ENCODE measurements at regions of chr13 and their contacts with region 1.

Region 1: GRCh38 chr13:20828539-20829364 is 55.0 kb upstream of the EEF1AKMT1 start:
- DNase-seq: peak; percentile 32
- ATAC-seq: peak; percentile 86
- H3K4me3 Mint-ChIP-seq: no peak overlapping the region
- H3K27ac Mint-ChIP-seq: peak overlapping the region; percentile 48
- H3K4me1 Mint-ChIP-seq: peaks cover 7% of the 10 kb centered on the region
- H3K27me3 Mint-ChIP-seq: no peaks in the 10 kb centered on the region
- CTCF ChIP-seq: peak; percentile 79

Region 2: GRCh38 chr13:20495082-20496023 is 333.4 kb before region 1 on chr13:
- CTCF ChIA-PET with region 1: interaction called, 11 read pairs
- POLR2A ChIA-PET with region 1: no interaction called
- intact Hi-C with region 1: loop called (anchors 2 kb)
- DNase-seq: peak; percentile 79
- ATAC-seq: peak; percentile 89
- H3K4me3 Mint-ChIP-seq: no peak overlapping the region
- H3K27ac Mint-ChIP-seq: no peak overlapping the region
- H3K4me1 Mint-ChIP-seq: peaks cover 2% of the 10 kb centered on the region
- H3K27me3 Mint-ChIP-seq: no peaks in the 10 kb centered on the region
- CTCF ChIP-seq: peak; percentile 96

Region 3: GRCh38 chr13:20721454-20722357 is 107.0 kb before region 1 on chr13:
- CTCF ChIA-PET with region 1: interaction called, 15 read pairs
- POLR2A ChIA-PET with region 1: interaction called, 3 read pairs
- intact Hi-C with region 1: no loop called
- DNase-seq: peak; percentile 66
- ATAC-seq: peak; percentile 75
- H3K4me3 Mint-ChIP-seq: peak overlapping the region; percentile 61
- H3K27ac Mint-ChIP-seq: no peak overlapping the region
- H3K4me1 Mint-ChIP-seq: peaks cover 6% of the 10 kb centered on the region
- H3K27me3 Mint-ChIP-seq: peaks cover 20% of the 10 kb centered on the region
- CTCF ChIP-seq: no peak

Region 4: DNA sequence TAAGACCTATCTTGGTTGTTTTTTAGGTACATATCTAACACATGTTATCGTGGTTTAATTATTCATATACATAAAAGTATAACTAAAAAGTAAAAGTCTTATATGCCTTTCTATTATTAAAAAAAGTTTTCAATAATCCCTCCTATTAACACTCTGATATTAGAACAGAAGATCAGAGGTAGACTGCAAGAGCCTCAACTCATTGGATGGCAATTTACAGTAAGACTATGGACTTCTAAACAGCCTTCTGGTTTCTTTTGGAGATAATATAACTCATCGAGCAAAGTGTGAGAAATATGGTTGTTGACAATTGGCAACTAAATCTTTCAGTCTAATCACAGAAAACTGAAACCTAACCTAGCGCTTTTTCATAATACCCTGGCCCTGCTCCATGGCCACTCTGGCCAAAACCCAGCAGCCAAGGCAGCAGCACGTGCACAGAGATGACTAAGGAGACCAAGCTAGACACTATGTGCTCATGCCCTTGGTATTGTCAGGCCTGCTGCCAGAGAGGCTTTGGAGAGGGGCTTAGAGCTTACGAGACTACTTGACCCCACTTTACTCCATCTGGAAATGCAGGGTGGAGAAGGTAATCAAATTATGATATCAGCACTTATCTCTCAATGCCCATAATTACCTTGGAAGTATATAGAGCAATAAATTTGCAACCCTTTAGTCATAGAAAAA is 14.4 kb before region 1 on chr13:
- CTCF ChIA-PET with region 1: interaction called, 25 read pairs
- POLR2A ChIA-PET with region 1: no interaction called
- intact Hi-C with region 1: no loop called
- DNase-seq: no peak
- ATAC-seq: no peak
- H3K4me3 Mint-ChIP-seq: no peak overlapping the region
- H3K27ac Mint-ChIP-seq: no peak overlapping the region
- H3K4me1 Mint-ChIP-seq: peaks cover 4% of the 10 kb centered on the region
- H3K27me3 Mint-ChIP-seq: no peaks in the 10 kb centered on the region
- CTCF ChIP-seq: no peak

Region 5: DNA sequence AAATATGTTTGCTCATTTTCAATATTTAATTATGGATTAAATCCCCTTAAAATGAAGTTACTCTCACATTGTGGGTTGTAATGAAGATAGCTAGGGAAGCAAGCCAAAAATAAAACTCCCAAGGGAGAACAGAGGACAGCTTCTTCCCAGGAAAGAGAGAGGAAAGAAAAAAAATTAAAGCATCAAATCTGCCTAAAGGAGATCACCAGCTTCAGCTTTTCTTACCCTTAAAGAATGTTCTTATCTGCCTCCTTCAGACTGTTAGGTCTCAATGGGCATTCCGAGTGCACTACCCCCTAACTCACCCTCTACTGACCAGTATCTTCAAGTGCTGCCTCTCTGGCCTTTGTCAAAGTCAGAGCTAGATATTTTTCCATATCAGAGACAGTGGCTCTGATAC is 18.5 kb after region 1 on chr13:
- CTCF ChIA-PET with region 1: interaction called, 22 read pairs
- POLR2A ChIA-PET with region 1: interaction called, 3 read pairs
- intact Hi-C with region 1: no loop called
- DNase-seq: no peak
- ATAC-seq: no peak
- H3K4me3 Mint-ChIP-seq: no peak overlapping the region
- H3K27ac Mint-ChIP-seq: no peak overlapping the region
- H3K4me1 Mint-ChIP-seq: no peaks in the 10 kb centered on the region
- H3K27me3 Mint-ChIP-seq: no peaks in the 10 kb centered on the region
- CTCF ChIP-seq: no peak

Measured in activated CD8-positive, alpha-beta T cell treated with anti-CD3 and anti-CD28 coated beads for 36 hours (primary cell).